Mammary epithelial cell (primary cell): ENCODE measurements at regions of chr17 and their contacts with region 1.

Region 1: GRCh38 chr17:59106463-59107305 is at the start of gene TRIM37:
- DNase-seq: peak; percentile 99
- H3K4me3 ChIP-seq: peak within 1 kb of the TSS; percentile 89 to 92 (median 90)
- H3K27ac ChIP-seq: peak within 1 kb of the TSS; percentile 94
- H3K4me1 ChIP-seq: peaks cover 7% of the 10 kb centered on the region
- H3K27me3 ChIP-seq: no peaks in the 10 kb centered on the region
- CTCF ChIP-seq: peak in 1 of 2 donors; percentile 14
- total RNA-seq, gene TRIM37: 34.2 to 42.7 TPM

Region 2: GRCh38 chr17:59004338-59005111 is 102.2 kb before region 1 on chr17:
- CTCF ChIA-PET with region 1: no interaction called
- dilution Hi-C with region 1: no loop called
- in situ Hi-C with region 1: no loop called
- intact Hi-C with region 1: no loop called
- DNase-seq: peak; percentile 29
- H3K4me3 ChIP-seq: no peak overlapping the region
- H3K27ac ChIP-seq: no peak overlapping the region
- H3K4me1 ChIP-seq: no peaks in the 10 kb centered on the region
- H3K27me3 ChIP-seq: no peaks in the 10 kb centered on the region
- CTCF ChIP-seq: peak; percentile 90 to 92

Region 3: GRCh38 chr17:59018019-59018418 is 88.7 kb before region 1 on chr17:
- CTCF ChIA-PET with region 1: no interaction called
- dilution Hi-C with region 1: no loop called
- in situ Hi-C with region 1: no loop called
- intact Hi-C with region 1: no loop called
- DNase-seq: no peak
- H3K4me3 ChIP-seq: no peak overlapping the region
- H3K27ac ChIP-seq: no peak overlapping the region
- H3K4me1 ChIP-seq: no peaks in the 10 kb centered on the region
- H3K27me3 ChIP-seq: no peaks in the 10 kb centered on the region
- CTCF ChIP-seq: no peak

Region 4: GRCh38 chr17:59040199-59040598 is 66.5 kb before region 1 on chr17:
- CTCF ChIA-PET with region 1: no interaction called
- dilution Hi-C with region 1: loop called (anchors 5 kb)
- in situ Hi-C with region 1: no loop called
- intact Hi-C with region 1: no loop called
- DNase-seq: no peak
- H3K4me3 ChIP-seq: no peak overlapping the region
- H3K27ac ChIP-seq: no peak overlapping the region
- H3K4me1 ChIP-seq: no peaks in the 10 kb centered on the region
- H3K27me3 ChIP-seq: no peaks in the 10 kb centered on the region
- CTCF ChIP-seq: no peak

Region 5: GRCh38 chr17:59093702-59094231 is 12.9 kb before region 1 on chr17:
- CTCF ChIA-PET with region 1: no interaction called
- dilution Hi-C with region 1: no loop called
- in situ Hi-C with region 1: no loop called
- intact Hi-C with region 1: loop called (anchors 1 kb)
- DNase-seq: peak; percentile 92
- H3K4me3 ChIP-seq: no peak overlapping the region
- H3K27ac ChIP-seq: peak overlapping the region; percentile 74
- H3K4me1 ChIP-seq: peaks cover 19% of the 10 kb centered on the region
- H3K27me3 ChIP-seq: no peaks in the 10 kb centered on the region
- CTCF ChIP-seq: no peak

Region 6: GRCh38 chr17:59131131-59131530 is 24.4 kb after region 1 on chr17:
- CTCF ChIA-PET with region 1: no interaction called
- dilution Hi-C with region 1: no loop called
- in situ Hi-C with region 1: no loop called
- intact Hi-C with region 1: no loop called
- DNase-seq: no peak
- H3K4me3 ChIP-seq: no peak overlapping the region
- H3K27ac ChIP-seq: no peak overlapping the region
- H3K4me1 ChIP-seq: no peaks in the 10 kb centered on the region
- H3K27me3 ChIP-seq: no peaks in the 10 kb centered on the region
- CTCF ChIP-seq: no peak

Region 7: GRCh38 chr17:59149841-59150511 is 43.3 kb after region 1 on chr17:
- CTCF ChIA-PET with region 1: no interaction called
- dilution Hi-C with region 1: no loop called
- in situ Hi-C with region 1: loop called in 1 of 2 experiments (anchors 5 kb)
- intact Hi-C with region 1: loop called (anchors 1 kb)
- DNase-seq: peak; percentile 61
- H3K4me3 ChIP-seq: no peak overlapping the region
- H3K27ac ChIP-seq: peak overlapping the region; percentile 39
- H3K4me1 ChIP-seq: peaks cover 25% of the 10 kb centered on the region
- H3K27me3 ChIP-seq: no peaks in the 10 kb centered on the region
- CTCF ChIP-seq: no peak

Region 8: GRCh38 chr17:59155439-59156182 is 48.9 kb after region 1 on chr17 and contains the start of gene PRR11:
- CTCF ChIA-PET with region 1: interaction called, 3 read pairs
- dilution Hi-C with region 1: no loop called
- in situ Hi-C with region 1: no loop called
- intact Hi-C with region 1: loop called (anchors 1 kb)
- DNase-seq: peak; percentile 100
- H3K4me3 ChIP-seq: peak within 1 kb of the TSS; percentile 88 to 98 (median 96)
- H3K27ac ChIP-seq: peak within 1 kb of the TSS; percentile 91
- H3K4me1 ChIP-seq: peaks cover 33% of the 10 kb centered on the region
- H3K27me3 ChIP-seq: no peaks in the 10 kb centered on the region
- CTCF ChIP-seq: no peak
- total RNA-seq, gene PRR11: 8.5 to 59.3 TPM